Endothelial cell of umbilical vein (primary cell): ENCODE measurements at regions of chr11 and their contacts with region 1.

Region 1: DNA sequence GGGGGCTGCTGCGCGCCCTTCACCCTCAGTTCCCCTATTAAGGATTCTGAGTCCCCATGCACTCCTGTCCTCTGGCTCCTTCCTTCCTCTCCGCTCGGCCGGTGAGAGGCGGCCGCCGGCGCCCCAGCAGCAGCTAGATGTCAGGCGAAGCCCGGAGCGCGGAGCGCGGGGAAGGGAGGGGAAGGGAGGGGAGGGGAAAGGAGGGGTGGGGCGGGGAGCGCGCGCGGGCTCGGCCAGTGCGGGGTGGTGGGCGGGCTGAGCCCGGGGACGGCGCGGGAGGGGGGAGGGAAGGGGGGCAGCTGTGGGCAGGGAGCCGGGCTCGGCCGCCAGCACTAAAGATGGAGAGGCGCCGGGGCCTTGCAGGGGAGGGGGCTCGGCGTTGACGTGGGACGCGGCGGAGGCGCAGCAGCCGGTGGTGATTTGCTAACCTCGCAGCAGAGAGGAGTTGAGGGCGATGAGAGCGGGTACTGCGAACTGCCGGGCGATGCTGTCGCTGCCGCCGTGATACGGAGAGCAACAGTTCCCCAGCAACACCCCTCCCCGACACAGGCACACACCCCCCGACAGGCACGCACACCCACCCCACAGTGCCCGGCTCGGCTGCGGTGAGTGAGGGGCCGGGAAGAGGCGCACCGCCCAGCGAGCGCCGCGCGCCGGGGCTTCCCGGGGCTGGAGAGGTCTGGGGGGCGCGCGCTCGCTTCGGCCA is at the start of gene ZBTB16:
- DNase-seq: peak; percentile 83
- H3K4me3 ChIP-seq: peak within 1 kb of the TSS; percentile 86 to 90 (median 87)
- H3K27ac ChIP-seq: peak within 1 kb of the TSS; percentile 78
- H3K4me1 ChIP-seq: peaks cover 8% of the 10 kb centered on the region
- H3K27me3 ChIP-seq: peaks cover 0 to 2% of the 10 kb centered on the region in 2 experiments
- CTCF ChIP-seq: peak; percentile 4 to 29
- POLR2A ChIP-seq: no peak
- total RNA-seq, gene ZBTB16: 19.5 and 20.3 TPM in 2 replicates

Region 2: GRCh38 chr11:113994077-113994954 is 65.1 kb before region 1 on chr11:
- CTCF ChIA-PET with region 1: interaction called, 3 read pairs
- POLR2A ChIA-PET with region 1: no interaction called
- dilution Hi-C with region 1: no loop called
- intact Hi-C with region 1: loop called (anchors 1 kb)
- DNase-seq: peak; percentile 11
- H3K4me3 ChIP-seq: no peak overlapping the region
- H3K27ac ChIP-seq: no peak overlapping the region
- H3K4me1 ChIP-seq: no peaks in the 10 kb centered on the region
- H3K27me3 ChIP-seq: peaks cover 2 to 4% of the 10 kb centered on the region in 2 experiments
- CTCF ChIP-seq: peak; percentile 50 to 69
- POLR2A ChIP-seq: no peak

Region 3: GRCh38 chr11:114019046-114019445 is 40.4 kb before region 1 on chr11:
- CTCF ChIA-PET with region 1: no interaction called
- POLR2A ChIA-PET with region 1: no interaction called
- dilution Hi-C with region 1: no loop called
- intact Hi-C with region 1: no loop called
- DNase-seq: no peak
- H3K4me3 ChIP-seq: no peak overlapping the region
- H3K27ac ChIP-seq: no peak overlapping the region
- H3K4me1 ChIP-seq: no peaks in the 10 kb centered on the region
- H3K27me3 ChIP-seq: no peaks in the 10 kb centered on the region
- CTCF ChIP-seq: no peak
- POLR2A ChIP-seq: no peak

Region 4: DNA sequence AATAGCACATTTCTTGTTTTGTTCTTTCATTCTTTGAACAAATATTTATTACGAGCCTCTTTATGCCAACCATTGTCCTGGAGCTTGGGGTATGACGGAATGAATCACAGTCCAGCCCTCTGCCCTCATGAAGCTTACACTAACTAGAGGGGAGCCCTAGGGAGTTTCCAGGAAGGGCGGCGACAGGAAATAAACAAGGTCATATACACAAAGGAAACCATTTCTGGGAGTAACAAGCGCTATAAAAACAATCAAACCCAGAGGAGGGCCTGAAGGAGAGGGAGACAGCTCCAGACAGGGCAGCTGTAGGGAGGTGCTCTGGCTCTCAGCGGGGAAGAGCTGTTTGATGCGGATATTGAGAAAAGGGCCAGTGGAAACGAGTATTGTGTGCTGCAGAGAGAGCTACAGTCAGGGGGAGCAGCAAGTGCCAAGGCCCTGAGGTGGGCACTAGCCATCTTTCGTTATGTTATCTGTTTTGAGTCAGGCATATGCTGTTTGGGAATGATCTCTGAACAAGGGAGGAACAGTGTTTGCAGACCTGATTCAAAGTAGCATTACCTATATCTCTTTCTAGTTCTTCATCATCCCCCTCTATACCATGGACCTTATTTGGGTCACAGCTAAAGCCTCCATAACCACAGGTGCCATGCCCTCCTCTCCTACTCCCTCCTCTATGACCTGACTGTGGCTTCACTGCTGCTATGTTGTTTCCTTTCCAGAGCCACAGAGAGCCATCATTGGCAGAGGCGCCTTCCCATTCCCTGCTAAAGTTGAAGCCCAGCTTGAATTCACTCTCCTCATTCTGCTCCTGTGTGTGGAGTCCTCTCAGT is 15.2 kb before region 1 on chr11:
- CTCF ChIA-PET with region 1: interaction called, 6 read pairs
- POLR2A ChIA-PET with region 1: interaction called, 3 read pairs
- dilution Hi-C with region 1: no loop called
- intact Hi-C with region 1: loop called (anchors 1 kb)
- DNase-seq: peak; percentile 85
- H3K4me3 ChIP-seq: no peak overlapping the region
- H3K27ac ChIP-seq: peak overlapping the region; percentile 81
- H3K4me1 ChIP-seq: peaks cover 22% of the 10 kb centered on the region
- H3K27me3 ChIP-seq: no peaks in the 10 kb centered on the region
- CTCF ChIP-seq: no peak
- POLR2A ChIP-seq: peak; percentile 19

Region 5: GRCh38 chr11:114110952-114111947 is 51.8 kb after region 1 on chr11:
- CTCF ChIA-PET with region 1: interaction called, 3 read pairs
- POLR2A ChIA-PET with region 1: interaction called, 3 read pairs
- dilution Hi-C with region 1: no loop called
- intact Hi-C with region 1: loop called (anchors 1 kb)
- DNase-seq: peak; percentile 75
- H3K4me3 ChIP-seq: peak overlapping the region in 1 of 3 experiments; percentile 32
- H3K27ac ChIP-seq: peak overlapping the region; percentile 25
- H3K4me1 ChIP-seq: peaks cover 20% of the 10 kb centered on the region
- H3K27me3 ChIP-seq: peaks cover 2% of the 10 kb centered on the region in 2 experiments
- CTCF ChIP-seq: no peak
- POLR2A ChIP-seq: no peak

Region 6: DNA sequence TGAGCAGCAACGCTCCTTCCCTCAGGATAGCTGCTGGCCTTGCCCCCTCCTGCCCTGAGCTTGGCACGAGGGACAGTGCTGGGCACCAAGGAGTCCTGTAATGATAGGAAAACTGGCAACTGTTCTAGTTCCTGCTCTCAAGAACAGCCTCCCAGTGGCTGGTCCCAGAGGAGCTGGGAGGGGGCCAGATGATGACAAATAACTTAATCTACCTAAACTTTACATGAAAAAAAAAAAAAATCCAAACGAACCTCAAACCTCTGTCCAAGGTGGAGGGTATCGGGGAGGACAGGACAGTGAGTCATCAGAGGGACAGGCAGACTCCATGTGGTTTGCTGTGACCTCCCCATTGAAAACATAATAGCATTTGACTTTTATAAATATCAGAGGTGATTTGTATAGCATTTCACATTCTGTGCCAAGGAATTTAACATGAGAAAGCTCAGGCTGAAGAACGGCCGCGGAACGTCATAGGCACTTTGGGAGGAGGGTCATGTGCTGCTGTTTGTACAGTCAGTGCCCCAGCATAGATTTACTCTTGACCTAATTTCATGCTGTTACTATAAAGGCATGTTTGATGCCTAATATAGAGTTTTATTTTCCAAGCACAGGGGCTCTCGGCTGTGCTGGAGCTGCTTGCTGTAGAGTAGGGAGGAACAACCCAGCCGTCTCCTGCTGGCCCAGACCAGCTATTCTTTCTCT is 138.5 kb after region 1 on chr11:
- CTCF ChIA-PET with region 1: interaction called, 16 read pairs
- POLR2A ChIA-PET with region 1: no interaction called
- dilution Hi-C with region 1: no loop called
- intact Hi-C with region 1: no loop called
- DNase-seq: peak; percentile 96
- H3K4me3 ChIP-seq: no peak overlapping the region
- H3K27ac ChIP-seq: peak overlapping the region; percentile 83
- H3K4me1 ChIP-seq: peaks cover 26% of the 10 kb centered on the region
- H3K27me3 ChIP-seq: no peaks in the 10 kb centered on the region
- CTCF ChIP-seq: no peak
- POLR2A ChIP-seq: peak; percentile 21